Ascending aorta (tissue), 2 donors: ENCODE measurements at regions of chr14 and their contacts with region 1.

Region 1: DNA sequence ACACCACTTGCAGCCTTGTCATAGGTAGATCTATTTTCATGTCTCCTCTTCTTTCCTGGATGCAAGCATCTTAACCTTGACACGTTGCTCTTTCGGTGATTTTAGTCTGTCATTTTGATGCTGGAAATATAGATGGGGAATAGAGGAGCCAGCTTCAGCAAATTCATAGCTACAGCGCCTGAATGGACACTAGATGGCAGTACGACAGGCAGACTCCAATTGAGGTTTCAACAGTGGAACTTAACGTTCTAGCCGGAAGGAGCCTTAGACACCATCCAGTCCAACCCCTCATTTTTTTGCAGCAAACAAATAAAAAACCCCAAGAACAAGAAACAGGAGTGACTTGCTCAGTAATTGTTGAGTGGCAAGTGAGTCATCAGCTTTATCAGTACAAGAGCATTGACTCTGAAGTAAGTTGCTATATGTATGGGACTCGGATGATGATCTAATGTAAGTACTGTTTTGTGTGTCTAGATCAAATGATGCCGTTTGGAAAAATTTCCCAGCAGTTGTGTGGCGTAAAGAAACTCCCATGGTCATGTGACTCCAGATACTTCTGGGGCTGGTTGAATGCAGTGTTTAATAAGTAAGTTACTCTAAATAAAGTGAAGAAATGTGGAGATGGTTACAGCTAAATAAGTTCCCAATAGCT is 9.0 kb downstream of the DMAC2L start:
- DNase-seq: peak in 1 of 2 donors; percentile 80
- H3K4me3 ChIP-seq: peak overlapping the region in 1 of 2 donors; percentile 57
- H3K27ac ChIP-seq: peak overlapping the region; percentile 75 to 84
- H3K4me1 ChIP-seq: peaks cover 0 to 4% of the 10 kb centered on the region in 2 donors
- H3K27me3 ChIP-seq: no peaks in the 10 kb centered on the region
- CTCF ChIP-seq: peak; percentile 78 to 86 (median 83)

Region 2: GRCh38 chr14:50396631-50397390 is 75.7 kb after region 1 on chr14 and contains the start of gene CDKL1:
- intact Hi-C with region 1: loop called (anchors 2 kb)
- DNase-seq: peak in 1 of 2 donors; percentile 73
- H3K4me3 ChIP-seq: peak within 1 kb of the TSS; percentile 82 to 83
- H3K27ac ChIP-seq: peak within 1 kb of the TSS; percentile 50 to 69
- H3K4me1 ChIP-seq: peaks cover 0 to 14% of the 10 kb centered on the region in 2 donors
- H3K27me3 ChIP-seq: no peaks in the 10 kb centered on the region
- CTCF ChIP-seq: no peak
- total RNA-seq, gene CDKL1: 0.85 TPM

Region 3: GRCh38 chr14:50798048-50798421 is 476.9 kb after region 1 on chr14:
- intact Hi-C with region 1: no loop called
- DNase-seq: no peak
- H3K4me3 ChIP-seq: no peak overlapping the region
- H3K27ac ChIP-seq: no peak overlapping the region
- H3K4me1 ChIP-seq: no peaks in the 10 kb centered on the region
- H3K27me3 ChIP-seq: no peaks in the 10 kb centered on the region
- CTCF ChIP-seq: no peak